ENCODE measurements at regions of chr14 and their contacts with region 1.

Region 1: GRCh38 chr14:49828640-49829039 is 23.9 kb downstream of the NEMF start:
- DNase-seq: no peak
- H3K4me3 Mint-ChIP-seq: no peak overlapping the region
- H3K27ac Mint-ChIP-seq: no peak overlapping the region
- H3K4me1 Mint-ChIP-seq: peaks cover 5% of the 10 kb centered on the region
- H3K27me3 Mint-ChIP-seq: no peaks in the 10 kb centered on the region

Region 2: GRCh38 chr14:49786315-49787110 is 42.1 kb before region 1 on chr14:
- intact Hi-C with region 1: loop called (anchors 5 kb)
- DNase-seq: no peak
- H3K4me3 Mint-ChIP-seq: no peak overlapping the region
- H3K27ac Mint-ChIP-seq: no peak overlapping the region
- H3K4me1 Mint-ChIP-seq: peaks cover 2% of the 10 kb centered on the region
- H3K27me3 Mint-ChIP-seq: no peaks in the 10 kb centered on the region

Region 3: GRCh38 chr14:50186107-50186506 is 357.5 kb after region 1 on chr14:
- intact Hi-C with region 1: no loop called
- DNase-seq: no peak
- H3K4me3 Mint-ChIP-seq: no peak overlapping the region
- H3K27ac Mint-ChIP-seq: no peak overlapping the region
- H3K4me1 Mint-ChIP-seq: no peaks in the 10 kb centered on the region
- H3K27me3 Mint-ChIP-seq: no peaks in the 10 kb centered on the region

Region 4: GRCh38 chr14:50272503-50272902 is 443.9 kb after region 1 on chr14:
- intact Hi-C with region 1: no loop called
- DNase-seq: no peak
- H3K4me3 Mint-ChIP-seq: no peak overlapping the region
- H3K27ac Mint-ChIP-seq: no peak overlapping the region
- H3K4me1 Mint-ChIP-seq: no peaks in the 10 kb centered on the region
- H3K27me3 Mint-ChIP-seq: no peaks in the 10 kb centered on the region